ENCODE measurements at regions of chr5 and their contacts with region 1.

Region 1: GRCh38 chr5:60287174-60287771 is 393.7 kb upstream of the PDE4D start:
- DNase-seq: peak; percentile 51
- ATAC-seq: no peak
- H3K4me3 Mint-ChIP-seq: no peak overlapping the region
- H3K27ac Mint-ChIP-seq: no peak overlapping the region
- H3K4me1 Mint-ChIP-seq: no peaks in the 10 kb centered on the region
- H3K27me3 Mint-ChIP-seq: no peaks in the 10 kb centered on the region

Region 2: DNA sequence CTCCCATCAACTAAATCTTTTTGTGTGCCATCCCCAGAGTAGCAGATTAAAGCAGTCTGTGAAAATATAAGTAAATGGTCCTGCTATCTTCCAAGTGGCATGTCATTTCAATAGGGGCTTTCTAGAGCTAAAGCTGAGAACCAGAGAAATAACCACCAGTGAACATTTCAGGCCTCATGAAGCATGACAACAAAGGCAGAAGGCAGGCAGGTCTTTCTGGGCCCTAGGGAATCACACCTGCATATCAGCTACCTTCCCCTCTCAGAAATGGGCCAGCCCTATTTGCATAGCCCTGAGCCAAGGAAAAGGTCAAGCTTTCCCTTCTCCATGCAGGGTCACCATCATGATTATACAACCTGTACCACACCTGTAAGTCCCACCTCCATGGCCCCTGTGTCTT is 207.4 kb after region 1 on chr5:
- CTCF ChIA-PET with region 1: no interaction called
- POLR2A ChIA-PET with region 1: no interaction called
- intact Hi-C with region 1: no loop called
- DNase-seq: no peak
- ATAC-seq: no peak
- H3K4me3 Mint-ChIP-seq: no peak overlapping the region
- H3K27ac Mint-ChIP-seq: no peak overlapping the region
- H3K4me1 Mint-ChIP-seq: no peaks in the 10 kb centered on the region
- H3K27me3 Mint-ChIP-seq: no peaks in the 10 kb centered on the region

Region 3: DNA sequence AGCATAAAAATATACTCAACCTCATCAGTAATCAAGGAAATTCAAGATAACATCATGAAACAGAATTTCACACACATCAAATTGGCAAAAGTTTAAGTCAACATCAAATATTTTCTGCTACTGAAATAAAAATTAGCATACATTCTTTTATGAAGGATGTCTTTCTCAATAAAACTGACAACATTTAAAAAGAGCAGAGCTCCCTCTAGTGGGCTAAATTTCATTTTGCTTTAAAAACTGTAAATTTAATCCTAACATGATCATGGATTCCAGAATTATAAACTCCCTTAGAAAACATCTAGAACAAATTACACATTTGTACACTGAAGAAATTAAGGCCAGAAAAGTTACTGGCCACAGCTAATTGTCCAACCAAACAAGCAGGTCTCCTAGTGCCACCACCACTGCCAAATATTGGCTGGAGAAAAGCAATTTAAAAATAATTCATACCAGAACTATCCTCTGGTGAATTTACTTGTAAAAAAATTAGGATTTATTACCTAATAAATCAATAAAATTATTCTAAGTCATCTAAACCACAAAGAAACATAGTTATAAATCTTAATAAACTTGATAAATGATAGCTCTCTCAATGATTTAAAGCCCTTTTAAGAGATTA is 381.5 kb after region 1 on chr5:
- CTCF ChIA-PET with region 1: no interaction called
- POLR2A ChIA-PET with region 1: no interaction called
- intact Hi-C with region 1: loop called in 1 of 2 experiments (anchors 5 kb)
- DNase-seq: no peak
- ATAC-seq: no peak
- H3K4me3 Mint-ChIP-seq: no peak overlapping the region
- H3K27ac Mint-ChIP-seq: no peak overlapping the region
- H3K4me1 Mint-ChIP-seq: no peaks in the 10 kb centered on the region
- H3K27me3 Mint-ChIP-seq: no peaks in the 10 kb centered on the region

Measured in activated CD4-positive, alpha-beta T cell treated with anti-CD3 and anti-CD28 coated beads for 36 hours (primary cell).